ENCODE measurements at regions of chr1 and their contacts with region 1.

Region 1: DNA sequence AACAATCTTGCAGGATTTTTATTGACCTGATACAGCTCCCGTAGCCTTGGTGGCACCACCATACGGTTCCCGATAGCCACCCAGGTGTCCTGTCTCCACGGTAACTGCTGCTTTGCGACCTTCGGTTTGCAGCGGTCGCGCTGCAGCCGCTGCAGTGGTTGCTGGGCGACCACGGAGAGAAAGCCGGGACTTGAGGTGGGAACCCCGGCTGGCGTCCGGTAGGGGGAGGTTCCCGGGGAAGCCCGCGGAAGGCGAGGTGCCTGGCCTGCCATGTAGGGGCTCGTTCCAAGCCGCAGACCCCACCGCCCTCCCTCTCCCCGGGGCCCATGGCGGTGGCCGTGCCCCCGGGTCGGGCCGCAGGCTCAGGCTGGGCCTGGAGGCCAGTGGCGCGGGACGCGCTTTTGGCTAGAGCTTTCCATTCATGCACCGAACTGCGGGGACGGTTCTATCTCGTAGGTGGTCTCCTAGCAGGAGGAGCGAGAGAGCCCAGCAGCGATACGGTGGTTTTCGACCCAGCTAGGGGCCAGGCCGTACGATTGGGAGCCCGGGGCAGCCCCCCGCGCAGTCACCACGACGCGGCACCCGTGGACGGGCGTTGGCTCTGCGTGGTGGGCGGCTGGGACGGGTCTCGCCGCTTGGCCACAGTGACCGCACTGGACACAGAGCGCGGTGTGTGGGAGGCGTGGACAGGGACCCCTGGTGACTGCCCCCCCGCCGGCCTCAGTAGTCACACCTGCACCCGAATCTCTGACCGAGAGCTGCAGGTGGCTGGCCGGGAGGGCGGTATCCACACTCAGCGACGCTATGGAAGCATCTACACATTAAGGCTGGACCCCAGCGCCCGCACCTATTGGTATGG is at the start of gene KLHDC9:
- DNase-seq: peak; percentile 78
- ATAC-seq: peak; percentile 82
- total RNA-seq, gene KLHDC9: 4.7 TPM

Region 2: GRCh38 chr1:160830321-160831153 is 267.9 kb before region 1 on chr1:
- intact Hi-C with region 1: no loop called
- DNase-seq: peak; percentile 67
- ATAC-seq: peak; percentile 49

Region 3: DNA sequence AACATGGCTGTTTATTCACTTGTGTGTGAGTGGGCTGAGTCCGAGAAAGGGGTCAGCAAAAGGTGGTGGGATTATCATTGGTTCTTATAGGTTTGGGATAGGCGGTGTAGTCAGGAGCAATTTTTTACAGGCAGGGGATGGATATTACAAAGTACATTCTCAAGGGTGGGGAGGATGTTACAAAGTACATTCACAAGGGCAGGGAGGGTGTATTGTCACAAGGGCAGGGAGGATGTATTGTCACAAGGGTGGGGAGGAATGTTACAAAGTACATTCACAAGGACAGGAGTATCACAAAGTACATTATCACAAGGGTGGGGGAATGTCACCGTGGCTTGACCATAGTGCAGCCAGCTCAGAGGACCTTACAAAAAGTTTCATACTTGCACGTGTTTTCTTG is 112.7 kb before region 1 on chr1:
- intact Hi-C with region 1: no loop called
- DNase-seq: no peak
- ATAC-seq: no peak

Region 4: GRCh38 chr1:160997323-160998038 is 101.0 kb before region 1 on chr1:
- intact Hi-C with region 1: loop called (anchors 2 kb)
- DNase-seq: peak; percentile 76
- ATAC-seq: peak; percentile 88

Region 5: GRCh38 chr1:161045750-161046571 is 52.5 kb before region 1 on chr1 and contains the start of gene USF1:
- intact Hi-C with region 1: loop called (anchors 5 kb)
- DNase-seq: peak; percentile 96
- ATAC-seq: peak; percentile 98
- total RNA-seq, gene USF1: 28.4 TPM